HepG2 (cell line): ENCODE measurements at regions of chr2 and their contacts with region 1.

Region 1: DNA sequence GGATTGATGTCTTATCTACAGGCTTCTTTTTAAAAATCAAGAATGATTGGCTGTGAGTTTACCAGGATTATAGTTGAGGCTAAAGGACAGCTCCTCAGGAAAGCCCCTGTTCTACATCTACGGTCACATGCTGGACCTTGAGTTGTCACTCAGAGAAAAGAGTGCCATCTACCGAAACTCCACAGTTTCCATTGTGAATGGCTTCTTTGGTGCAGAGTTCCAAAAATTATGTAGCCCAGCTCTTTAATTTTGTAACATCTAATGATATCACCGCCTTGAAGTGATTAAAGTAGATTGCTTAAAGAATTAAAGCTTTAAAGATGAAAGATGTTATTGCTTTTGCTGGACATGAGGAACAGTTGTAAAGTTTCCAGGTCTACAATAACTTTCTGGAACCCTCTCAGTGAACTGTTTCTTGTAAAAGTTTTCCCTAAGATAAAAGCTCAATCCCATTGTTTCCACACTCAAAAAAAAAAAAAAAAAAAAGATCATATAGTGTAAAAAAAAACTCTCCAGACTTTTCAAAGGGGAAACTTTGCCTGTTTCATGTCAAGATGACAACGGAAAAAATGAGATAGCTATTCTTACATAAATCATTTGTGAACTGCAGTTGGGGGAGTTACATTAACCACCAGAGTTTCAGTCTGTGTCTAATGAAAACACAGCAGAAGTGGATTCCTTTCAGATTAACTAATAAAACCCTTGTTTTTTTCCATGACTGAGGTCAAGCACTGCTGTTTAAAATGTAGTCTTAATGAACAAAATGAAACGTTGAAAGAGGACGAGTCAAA is 4.3 kb downstream of the COL3A1 start:
- DNase-seq: peak; percentile 43
- ATAC-seq: peak; percentile 96
- H3K4me3 ChIP-seq: no peak overlapping the region
- H3K27ac ChIP-seq: no peak overlapping the region
- H3K4me1 ChIP-seq: no peaks in the 10 kb centered on the region
- H3K27me3 ChIP-seq: no peaks in the 10 kb centered on the region
- CTCF ChIP-seq: peak; percentile 66
- EP300 ChIP-seq: no peak
- POLR2A ChIP-seq: no peak
- RAD21 ChIP-seq: no peak

Region 2: DNA sequence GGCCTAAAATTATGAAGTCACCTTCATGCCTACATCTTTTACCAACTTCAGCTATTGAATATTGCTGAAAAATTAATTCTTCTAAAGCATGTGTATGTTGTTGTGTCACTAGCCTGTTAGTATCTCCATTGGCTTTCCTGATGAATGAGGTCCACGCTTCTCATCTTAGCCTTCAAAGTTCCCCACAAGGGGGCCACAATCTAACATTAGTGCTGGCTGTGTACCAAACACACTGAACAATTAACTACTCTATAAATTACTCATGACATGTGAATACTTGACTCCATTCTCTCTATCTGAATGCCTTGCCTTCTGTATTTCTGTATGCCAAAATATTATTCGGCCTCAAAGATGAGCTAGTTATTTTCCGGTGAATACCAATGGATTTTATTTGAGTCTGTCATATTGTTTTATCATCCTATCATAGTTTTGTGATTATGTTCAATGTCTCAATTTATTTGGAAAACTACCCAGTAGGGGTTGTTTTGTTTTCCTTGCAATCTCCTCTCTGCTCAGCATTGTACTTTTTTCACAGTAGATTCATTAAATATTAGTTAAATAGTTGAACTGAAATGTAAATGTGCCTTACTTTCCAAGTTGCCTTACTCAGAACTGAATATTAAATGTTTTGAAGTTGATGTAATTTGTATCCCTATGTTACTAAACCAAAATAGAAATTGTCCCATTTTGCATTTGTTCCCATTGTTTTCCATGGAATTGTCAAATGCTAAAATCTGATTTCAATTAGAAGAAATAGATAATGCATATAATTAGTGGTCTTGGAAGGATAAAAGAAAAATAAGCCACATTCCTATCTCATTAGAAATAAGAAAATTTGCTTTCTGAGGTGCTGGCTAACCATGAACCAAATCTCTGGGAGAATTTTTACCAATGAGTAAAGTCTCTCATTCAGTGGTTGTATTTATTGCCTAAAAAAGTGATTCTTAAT is 212.7 kb before region 1 on chr2:
- CTCF ChIA-PET with region 1: interaction called, 3 read pairs
- POLR2A ChIA-PET with region 1: no interaction called
- in situ Hi-C with region 1: no loop called
- intact Hi-C with region 1: loop called (anchors 1 kb)
- DNase-seq: peak; percentile 15
- ATAC-seq: peak; percentile 83
- H3K4me3 ChIP-seq: no peak overlapping the region
- H3K27ac ChIP-seq: no peak overlapping the region
- H3K4me1 ChIP-seq: no peaks in the 10 kb centered on the region
- H3K27me3 ChIP-seq: no peaks in the 10 kb centered on the region
- CTCF ChIP-seq: peak; percentile 54
- EP300 ChIP-seq: no peak
- POLR2A ChIP-seq: no peak
- RAD21 ChIP-seq: no peak

Region 3: GRCh38 chr2:189086710-189087109 is 108.2 kb after region 1 on chr2:
- CTCF ChIA-PET with region 1: no interaction called
- POLR2A ChIA-PET with region 1: no interaction called
- in situ Hi-C with region 1: no loop called
- intact Hi-C with region 1: no loop called
- DNase-seq: no peak
- ATAC-seq: no peak
- H3K4me3 ChIP-seq: no peak overlapping the region
- H3K27ac ChIP-seq: no peak overlapping the region
- H3K4me1 ChIP-seq: no peaks in the 10 kb centered on the region
- H3K27me3 ChIP-seq: no peaks in the 10 kb centered on the region
- CTCF ChIP-seq: no peak
- EP300 ChIP-seq: no peak
- POLR2A ChIP-seq: no peak
- RAD21 ChIP-seq: no peak

Region 4: DNA sequence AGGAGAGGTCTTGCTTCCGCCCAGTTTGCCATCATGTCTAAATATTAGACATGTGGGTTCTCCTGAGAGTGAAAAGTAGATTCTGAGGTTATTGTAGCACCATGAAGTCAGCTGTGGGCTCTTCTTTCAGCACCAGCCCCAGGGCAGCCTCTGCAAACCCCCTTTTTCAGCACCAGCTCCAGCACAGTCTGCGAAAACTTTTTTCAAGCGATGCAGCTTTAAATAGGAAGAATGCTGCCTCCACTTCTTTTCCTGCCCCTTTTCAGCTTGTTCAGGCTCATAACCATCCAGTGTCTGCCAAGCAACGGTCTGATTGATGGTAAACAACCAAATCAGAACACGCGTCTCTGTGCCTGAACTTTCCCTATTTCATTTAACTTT is 201.1 kb after region 1 on chr2 and contains the start of gene COL5A2:
- CTCF ChIA-PET with region 1: no interaction called
- POLR2A ChIA-PET with region 1: no interaction called
- in situ Hi-C with region 1: no loop called
- intact Hi-C with region 1: no loop called
- DNase-seq: no peak
- ATAC-seq: peak; percentile 42; the same call in 2 of the 3 replicates
- H3K4me3 ChIP-seq: no peak within 1 kb of the TSS
- H3K27ac ChIP-seq: no peak within 1 kb of the TSS
- H3K4me1 ChIP-seq: peaks cover 12% of the 10 kb centered on the region
- H3K27me3 ChIP-seq: no peaks in the 10 kb centered on the region
- CTCF ChIP-seq: no peak
- EP300 ChIP-seq: no peak
- POLR2A ChIP-seq: no peak
- RAD21 ChIP-seq: no peak
- total RNA-seq, gene COL5A2: 1.5 and 1.6 TPM in 2 replicates